CD8-positive, alpha-beta T cell (primary cell): ENCODE measurements at regions of chr22 and their contacts with region 1.

Region 1: DNA sequence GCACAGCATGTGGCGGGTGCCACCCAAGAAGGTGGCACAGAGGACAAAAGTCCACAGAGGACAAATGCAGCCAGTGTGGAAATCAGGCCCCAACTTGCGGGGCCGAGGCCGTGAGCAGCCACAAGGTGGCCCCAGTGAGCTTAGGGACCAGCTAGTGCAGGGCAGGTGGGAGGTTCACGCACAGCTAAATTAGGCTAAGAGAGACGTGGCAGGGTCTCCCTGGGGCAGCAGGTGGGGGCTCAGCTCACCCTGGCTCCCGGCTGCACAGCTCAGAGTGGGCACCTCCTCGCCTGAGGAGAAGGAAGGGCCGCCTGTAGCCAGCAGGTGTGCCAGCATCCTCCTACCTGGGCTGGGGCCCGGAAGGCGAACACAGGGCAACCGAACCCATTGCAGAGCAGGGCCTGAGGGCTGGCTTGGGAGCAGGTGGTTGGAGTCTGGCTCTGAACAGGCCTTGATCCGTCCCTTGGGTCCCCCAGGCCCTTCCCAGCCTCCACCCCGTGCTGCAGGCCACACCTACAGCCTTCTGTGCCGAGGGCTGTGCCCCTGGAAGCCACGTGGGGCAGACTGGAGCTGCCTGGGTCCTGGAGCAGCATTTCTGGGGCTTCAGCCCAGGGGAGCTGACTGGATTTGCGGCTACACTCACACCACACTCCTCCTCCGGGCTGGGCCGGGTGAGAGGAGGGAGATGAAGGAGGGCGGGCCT is 26.1 kb upstream of the CELSR1 start:
- DNase-seq: peak; percentile 63 to 86 (median 76)
- ATAC-seq: peak; percentile 95
- H3K4me3 ChIP-seq: no peak overlapping the region
- H3K4me3 Mint-ChIP-seq: no peak overlapping the region
- H3K27ac ChIP-seq: no peak overlapping the region
- H3K27ac Mint-ChIP-seq: no peak overlapping the region
- H3K4me1 ChIP-seq: peaks cover 5% of the 10 kb centered on the region
- H3K4me1 Mint-ChIP-seq: peaks cover 2% of the 10 kb centered on the region
- H3K27me3 ChIP-seq: no peaks in the 10 kb centered on the region
- H3K27me3 Mint-ChIP-seq: no peaks in the 10 kb centered on the region
- CTCF ChIP-seq: peak; percentile 68

Region 2: DNA sequence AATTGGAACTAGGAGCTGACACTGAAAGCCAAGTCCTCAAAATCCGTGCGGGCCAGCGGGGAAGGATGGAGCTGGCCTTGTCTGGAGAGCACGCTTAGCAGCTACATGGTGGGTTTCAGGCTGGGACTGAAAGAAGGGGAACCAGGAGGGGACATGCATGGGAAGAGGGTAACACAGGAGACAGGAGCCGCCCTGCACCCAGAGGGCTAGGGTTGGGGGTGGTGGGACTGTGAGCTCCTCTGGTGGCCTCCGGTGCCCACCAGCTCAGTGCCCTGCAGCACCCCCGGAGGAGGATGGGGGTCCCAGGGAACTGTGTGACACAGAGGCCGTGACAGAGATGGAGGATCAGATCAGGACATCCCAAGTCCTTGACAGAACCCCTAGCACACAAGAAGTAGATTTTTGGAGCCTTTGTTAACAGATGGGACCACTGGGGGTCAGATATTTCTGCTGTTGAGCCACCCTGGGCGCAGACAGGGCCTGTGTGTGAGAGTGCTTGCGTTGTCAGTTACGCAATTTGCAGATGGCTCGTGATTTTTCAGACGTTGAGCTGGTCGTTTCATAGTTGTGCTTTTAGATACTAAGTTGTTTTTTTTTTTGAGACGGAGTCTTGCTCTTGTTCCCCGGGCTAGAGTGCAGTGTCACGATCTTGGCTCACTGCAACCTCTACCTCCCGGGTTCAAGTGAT is 35.3 kb after region 1 on chr22:
- CTCF ChIA-PET with region 1: interaction called, 10 read pairs
- POLR2A ChIA-PET with region 1: no interaction called
- intact Hi-C with region 1: no loop called
- DNase-seq: no peak
- ATAC-seq: no peak
- H3K4me3 ChIP-seq: no peak overlapping the region
- H3K4me3 Mint-ChIP-seq: no peak overlapping the region
- H3K27ac ChIP-seq: no peak overlapping the region
- H3K27ac Mint-ChIP-seq: no peak overlapping the region
- H3K4me1 ChIP-seq: peaks cover 3% of the 10 kb centered on the region
- H3K4me1 Mint-ChIP-seq: peaks cover 3% of the 10 kb centered on the region
- H3K27me3 ChIP-seq: no peaks in the 10 kb centered on the region
- H3K27me3 Mint-ChIP-seq: no peaks in the 10 kb centered on the region
- CTCF ChIP-seq: no peak

Region 3: DNA sequence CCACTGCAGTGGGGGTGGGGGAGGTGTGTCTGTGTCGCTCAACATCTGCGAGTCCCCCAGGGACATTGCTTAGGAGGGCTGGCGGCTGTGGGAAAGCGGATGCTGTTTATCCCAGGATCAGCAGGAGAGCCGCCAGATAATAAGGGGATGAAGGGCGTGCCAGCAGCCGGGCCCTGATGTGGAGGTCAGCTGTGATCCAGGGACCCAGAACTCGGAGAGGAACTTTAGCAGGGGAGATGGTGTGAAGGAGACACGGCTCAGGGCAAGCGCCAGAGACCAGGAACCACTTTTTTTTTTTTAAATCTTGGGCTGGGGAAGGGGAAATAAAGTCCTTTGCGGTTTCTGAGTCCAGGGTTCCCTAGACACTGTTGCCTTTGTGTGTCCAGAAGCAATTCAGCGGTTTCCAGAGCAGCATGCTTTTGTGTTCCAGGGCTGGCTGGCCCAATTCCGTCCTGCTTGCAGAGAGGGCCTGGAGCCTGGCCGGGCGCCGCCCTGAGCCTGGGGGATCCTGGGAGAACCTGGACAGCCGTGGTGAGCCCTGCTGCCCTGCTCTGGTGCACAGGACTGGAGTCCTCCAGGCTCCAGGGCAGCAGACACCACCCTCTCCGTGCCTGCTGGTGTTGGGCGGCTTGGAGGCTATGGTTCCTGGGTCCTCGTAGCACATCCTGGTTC is 56.4 kb after region 1 on chr22 and contains the start of gene GRAMD4:
- CTCF ChIA-PET with region 1: interaction called, 4 read pairs
- POLR2A ChIA-PET with region 1: no interaction called
- intact Hi-C with region 1: loop called in 1 of 2 experiments (anchors 2 kb)
- DNase-seq: peak in 1 of 9 experiments; percentile 14
- ATAC-seq: no peak
- H3K4me3 ChIP-seq: no peak within 1 kb of the TSS
- H3K4me3 Mint-ChIP-seq: no peak within 1 kb of the TSS
- H3K27ac ChIP-seq: no peak within 1 kb of the TSS
- H3K27ac Mint-ChIP-seq: no peak within 1 kb of the TSS
- H3K4me1 ChIP-seq: no peaks in the 10 kb centered on the region
- H3K4me1 Mint-ChIP-seq: no peaks in the 10 kb centered on the region
- H3K27me3 ChIP-seq: no peaks in the 10 kb centered on the region
- H3K27me3 Mint-ChIP-seq: no peaks in the 10 kb centered on the region
- CTCF ChIP-seq: no peak
- total RNA-seq, gene GRAMD4: 8.4 to 8.7 TPM

Region 4: DNA sequence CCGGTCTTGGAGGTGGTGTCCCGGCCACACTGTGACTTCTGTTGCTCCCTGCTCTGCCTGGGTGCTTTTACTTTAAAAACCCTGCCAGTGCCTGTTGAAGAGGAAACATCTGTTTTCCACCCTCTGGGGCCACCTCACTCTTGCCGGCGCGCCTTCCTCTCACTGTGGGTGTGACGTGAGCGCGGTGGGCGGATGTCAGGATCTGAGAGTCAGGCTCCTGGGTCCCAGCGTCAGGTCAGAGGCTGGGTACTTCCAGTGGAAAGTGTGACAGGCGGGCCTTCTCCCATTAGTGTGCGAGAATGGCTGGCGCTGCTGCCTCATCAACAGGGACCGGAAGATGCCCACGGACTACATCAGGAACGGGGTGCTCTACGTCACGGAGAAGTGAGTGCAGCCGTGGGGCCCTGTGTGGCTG is 110.8 kb after region 1 on chr22:
- CTCF ChIA-PET with region 1: interaction called, 11 read pairs
- POLR2A ChIA-PET with region 1: no interaction called
- intact Hi-C with region 1: loop called (anchors 1 to 5 kb)
- DNase-seq: peak; percentile 54 to 95 (median 85)
- ATAC-seq: peak; percentile 87
- H3K4me3 ChIP-seq: peak overlapping the region; percentile 40 to 57
- H3K4me3 Mint-ChIP-seq: peak overlapping the region; percentile 93
- H3K27ac ChIP-seq: peak overlapping the region; percentile 44 to 70
- H3K27ac Mint-ChIP-seq: peak overlapping the region; percentile 96
- H3K4me1 ChIP-seq: peaks cover 32% of the 10 kb centered on the region
- H3K4me1 Mint-ChIP-seq: peaks cover 22% of the 10 kb centered on the region
- H3K27me3 ChIP-seq: no peaks in the 10 kb centered on the region
- H3K27me3 Mint-ChIP-seq: no peaks in the 10 kb centered on the region
- CTCF ChIP-seq: no peak

Region 5: DNA sequence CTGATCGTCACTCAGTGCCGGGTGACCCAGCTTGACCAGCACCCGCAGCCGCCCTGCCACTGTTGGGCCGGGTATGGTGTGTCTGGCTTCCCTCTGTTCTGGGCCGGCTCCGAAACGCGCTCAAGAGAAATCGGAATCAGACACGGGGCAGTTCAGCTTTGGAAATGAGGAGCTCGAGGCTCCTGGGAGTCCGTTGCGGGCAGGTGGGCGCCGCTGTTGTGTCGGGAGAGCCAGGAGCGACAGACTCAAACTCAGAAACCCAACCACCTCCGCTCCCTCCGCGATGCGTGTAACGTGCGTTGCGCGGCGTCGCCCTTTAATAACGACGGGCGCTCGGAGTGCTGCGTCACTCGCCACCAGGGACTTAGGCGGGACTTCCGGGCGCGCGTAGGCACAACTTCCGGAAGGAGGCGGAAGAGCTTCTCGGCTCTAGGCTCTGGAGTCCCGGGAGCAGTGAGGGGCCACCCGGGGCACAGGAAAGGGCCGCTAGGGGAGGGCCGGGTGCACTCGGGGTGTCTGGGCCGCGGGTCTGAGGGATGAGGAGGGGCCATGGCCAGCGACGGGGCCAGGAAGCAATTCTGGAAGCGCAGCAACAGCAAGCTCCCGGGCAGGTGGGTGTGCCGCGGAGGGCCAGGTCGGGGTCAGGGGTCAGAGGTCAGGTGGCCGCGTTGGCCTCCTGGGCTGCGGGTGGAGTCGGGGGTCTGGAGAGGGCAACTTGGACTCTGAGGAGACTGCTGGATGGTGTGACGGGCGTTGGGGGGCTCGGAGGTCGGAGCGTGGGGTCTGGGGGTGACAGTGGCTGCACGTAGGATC is 198.9 kb after region 1 on chr22 and contains the start of gene TBC1D22A:
- CTCF ChIA-PET with region 1: interaction called, 13 read pairs
- POLR2A ChIA-PET with region 1: interaction called, 3 read pairs
- intact Hi-C with region 1: no loop called
- DNase-seq: peak; percentile 91 to 97 (median 95)
- ATAC-seq: peak; percentile 86
- H3K4me3 ChIP-seq: peak within 1 kb of the TSS; percentile 84 to 99
- H3K4me3 Mint-ChIP-seq: peak within 1 kb of the TSS; percentile 99
- H3K27ac ChIP-seq: peak within 1 kb of the TSS; percentile 95 to 99
- H3K27ac Mint-ChIP-seq: peak within 1 kb of the TSS; percentile 100
- H3K4me1 ChIP-seq: peaks cover 36% of the 10 kb centered on the region
- H3K4me1 Mint-ChIP-seq: peaks cover 64% of the 10 kb centered on the region
- H3K27me3 ChIP-seq: no peaks in the 10 kb centered on the region
- H3K27me3 Mint-ChIP-seq: no peaks in the 10 kb centered on the region
- CTCF ChIP-seq: no peak
- total RNA-seq, gene TBC1D22A: 21.8 to 27.4 TPM